ENCODE measurements at regions of chr15 and their contacts with region 1.

Region 1: GRCh38 chr15:68650901-68651709 is 72.3 kb downstream of the CORO2B start:
- DNase-seq: peak; percentile 65
- ATAC-seq: peak; percentile 58
- H3K4me3 ChIP-seq: no peak overlapping the region
- H3K4me3 Mint-ChIP-seq: no peak overlapping the region
- H3K27ac ChIP-seq: no peak overlapping the region
- H3K27ac Mint-ChIP-seq: no peak overlapping the region
- H3K4me1 ChIP-seq: no peaks in the 10 kb centered on the region
- H3K4me1 Mint-ChIP-seq: no peaks in the 10 kb centered on the region
- H3K27me3 ChIP-seq: peaks cover 0 to 6% (median 0%) of the 10 kb centered on the region in 4 experiments
- H3K27me3 Mint-ChIP-seq: peaks cover 8% of the 10 kb centered on the region
- CTCF ChIP-seq: peak; percentile 77

Region 2: DNA sequence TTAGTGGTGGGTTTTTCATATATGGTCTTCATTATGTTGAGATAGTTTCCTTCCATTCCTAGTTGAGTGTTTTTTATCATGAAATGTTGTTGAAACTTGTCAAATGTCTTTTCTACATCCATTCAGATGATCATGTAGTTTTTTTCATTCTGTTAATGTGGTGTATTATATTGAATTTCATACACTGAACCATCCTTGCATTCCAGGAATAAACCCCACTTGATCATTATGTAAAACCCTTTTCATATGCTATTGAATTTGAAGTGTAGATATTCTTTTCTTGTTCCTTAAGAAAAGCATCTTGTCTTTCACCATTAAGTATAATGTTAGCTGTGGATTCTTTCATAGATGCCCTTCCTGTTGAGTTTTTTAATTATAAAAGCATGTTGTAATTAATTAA is 554.1 kb before region 1 on chr15:
- CTCF ChIA-PET with region 1: no interaction called
- POLR2A ChIA-PET with region 1: no interaction called
- intact Hi-C with region 1: no loop called
- DNase-seq: no peak
- ATAC-seq: no peak
- H3K4me3 ChIP-seq: no peak overlapping the region
- H3K4me3 Mint-ChIP-seq: no peak overlapping the region
- H3K27ac ChIP-seq: no peak overlapping the region
- H3K27ac Mint-ChIP-seq: no peak overlapping the region
- H3K4me1 ChIP-seq: peaks cover 0 to 34% of the 10 kb centered on the region in 2 donors
- H3K4me1 Mint-ChIP-seq: peaks cover 53% of the 10 kb centered on the region
- H3K27me3 ChIP-seq: no peaks in the 10 kb centered on the region
- H3K27me3 Mint-ChIP-seq: no peaks in the 10 kb centered on the region
- CTCF ChIP-seq: no peak

Region 3: GRCh38 chr15:68637767-68638404 is 13.2 kb before region 1 on chr15:
- CTCF ChIA-PET with region 1: interaction called, 46 read pairs
- POLR2A ChIA-PET with region 1: no interaction called
- intact Hi-C with region 1: no loop called
- DNase-seq: no peak
- ATAC-seq: no peak
- H3K4me3 ChIP-seq: no peak overlapping the region
- H3K4me3 Mint-ChIP-seq: no peak overlapping the region
- H3K27ac ChIP-seq: peak overlapping the region in 1 of 2 donors; percentile 1
- H3K27ac Mint-ChIP-seq: peak overlapping the region; percentile 13
- H3K4me1 ChIP-seq: peaks cover 43 to 49% of the 10 kb centered on the region in 2 donors
- H3K4me1 Mint-ChIP-seq: peaks cover 66% of the 10 kb centered on the region
- H3K27me3 ChIP-seq: no peaks in the 10 kb centered on the region
- H3K27me3 Mint-ChIP-seq: no peaks in the 10 kb centered on the region
- CTCF ChIP-seq: no peak

Measured in B cell (primary cell).